H1 (cell line): ENCODE measurements at regions of chr3 and their contacts with region 1.

Region 1: GRCh38 chr3:100364421-100364820 is 29.9 kb downstream of the NIT2 start:
- DNase-seq: no peak
- H3K4me3 ChIP-seq: no peak overlapping the region
- H3K27ac ChIP-seq: no peak overlapping the region
- H3K4me1 ChIP-seq: no peaks in the 10 kb centered on the region
- H3K27me3 ChIP-seq: no peaks in the 10 kb centered on the region
- CTCF ChIP-seq: no peak
- EP300 ChIP-seq: no peak
- POLR2A ChIP-seq: no peak
- RAD21 ChIP-seq: no peak

Region 2: GRCh38 chr3:100316641-100317069 is 47.8 kb before region 1 on chr3:
- CTCF ChIA-PET with region 1: interaction called, 11 read pairs
- POLR2A ChIA-PET with region 1: no interaction called
- DNase-seq: no peak
- H3K4me3 ChIP-seq: no peak overlapping the region
- H3K27ac ChIP-seq: no peak overlapping the region
- H3K4me1 ChIP-seq: peaks cover 0 to 3% (median 0%) of the 10 kb centered on the region in 4 experiments; a peak in 2 of 7 replicates
- H3K27me3 ChIP-seq: no peaks in the 10 kb centered on the region
- CTCF ChIP-seq: peak in 2 of 3 experiments; percentile 44 to 60; a peak in 2 of 4 replicates
- EP300 ChIP-seq: no peak
- POLR2A ChIP-seq: no peak
- RAD21 ChIP-seq: peak; percentile 74 to 75

Region 3: DNA sequence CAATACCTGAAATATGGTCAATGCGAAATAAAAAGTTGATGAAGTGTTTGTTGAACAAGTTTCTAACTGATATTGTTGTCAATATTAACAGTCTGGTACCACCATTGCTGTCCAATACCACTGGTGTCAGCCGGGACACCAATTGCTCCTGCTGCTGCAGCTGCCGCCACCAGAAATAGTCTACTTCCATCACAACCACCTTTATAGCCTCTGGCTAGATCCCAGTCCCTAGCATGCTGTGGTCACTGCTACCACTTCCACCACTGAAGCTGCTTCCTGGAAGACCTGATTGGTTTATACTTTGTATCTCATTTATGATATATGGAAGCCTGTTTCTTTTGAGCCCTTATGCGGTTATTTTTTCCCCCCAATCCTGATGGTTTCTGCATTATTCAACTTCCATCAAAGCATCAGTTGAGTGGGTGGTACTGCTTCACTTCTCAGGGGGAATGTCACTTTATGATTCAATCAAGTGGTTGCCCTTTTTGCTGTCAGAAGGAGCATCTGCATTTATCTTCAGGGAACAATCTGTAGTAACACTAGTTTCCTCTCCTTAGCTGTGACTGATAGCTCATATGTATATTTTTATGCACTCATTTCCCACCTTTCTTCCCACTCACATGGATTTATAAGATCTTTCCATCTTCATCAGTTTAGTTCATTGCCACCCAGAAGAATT is 48.6 kb after region 1 on chr3:
- CTCF ChIA-PET with region 1: no interaction called
- POLR2A ChIA-PET with region 1: no interaction called
- DNase-seq: no peak
- H3K4me3 ChIP-seq: no peak overlapping the region
- H3K27ac ChIP-seq: no peak overlapping the region
- H3K4me1 ChIP-seq: peaks cover 2 to 15% (median 5%) of the 10 kb centered on the region in 4 experiments; a peak in 5 of 7 replicates
- H3K27me3 ChIP-seq: no peaks in the 10 kb centered on the region
- CTCF ChIP-seq: no peak
- EP300 ChIP-seq: no peak
- POLR2A ChIP-seq: no peak
- RAD21 ChIP-seq: no peak